GM12878 (cell line): ENCODE measurements at regions of chr13 and their contacts with region 1.

Region 1: DNA sequence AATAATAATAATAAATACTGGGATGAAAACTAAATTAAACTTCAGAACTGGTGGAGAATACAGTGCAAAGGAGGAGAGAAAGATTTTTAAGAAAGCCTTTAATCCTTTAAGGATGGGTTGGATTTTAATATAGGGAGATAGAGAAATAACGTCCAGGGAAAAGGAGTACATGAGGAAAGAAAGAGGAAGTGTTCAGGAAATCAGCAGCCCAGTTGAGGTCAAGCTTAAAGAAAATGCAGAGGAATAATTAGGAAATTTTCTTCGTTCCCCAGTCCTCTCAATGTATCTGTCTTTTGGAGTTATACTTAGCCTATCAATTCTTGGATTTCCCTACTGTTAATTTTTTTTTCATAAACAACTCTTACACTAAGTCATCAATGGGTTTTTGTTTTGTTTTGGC is 47.7 kb downstream of the INTS6 start:
- DNase-seq: no peak
- ATAC-seq: no peak
- H3K4me3 ChIP-seq: no peak overlapping the region
- H3K27ac ChIP-seq: no peak overlapping the region
- H3K4me1 ChIP-seq: peaks cover 7% of the 10 kb centered on the region; the same call in 1 of the 2 replicates
- H3K27me3 ChIP-seq: no peaks in the 10 kb centered on the region
- CTCF ChIP-seq: no peak
- EP300 ChIP-seq: no peak
- POLR2A ChIP-seq: no peak
- RAD21 ChIP-seq: no peak

Region 2: DNA sequence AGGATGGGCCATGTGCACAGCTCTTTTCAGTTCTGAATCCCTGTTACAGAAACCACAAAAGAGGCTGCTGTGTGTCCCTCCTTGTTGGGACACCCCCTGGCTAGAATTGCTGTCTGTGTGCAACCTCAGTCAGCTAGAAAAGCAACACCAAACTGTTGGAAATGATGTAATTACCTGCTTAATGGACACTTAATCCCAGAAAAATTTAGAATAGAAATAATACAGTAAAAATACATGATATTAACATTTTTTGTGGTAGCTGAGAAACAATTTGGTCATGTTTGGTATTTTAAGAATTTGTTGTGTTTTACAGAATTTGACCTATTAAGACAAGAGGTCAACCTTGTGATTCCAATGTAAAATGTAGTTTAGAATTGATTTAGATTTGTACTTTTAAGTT is 136.1 kb before region 1 on chr13:
- CTCF ChIA-PET with region 1: no interaction called
- POLR2A ChIA-PET with region 1: no interaction called
- RAD21 ChIA-PET with region 1: no interaction called
- SMC1A ChIA-PET with region 1: no interaction called
- in situ Hi-C with region 1: no loop called
- intact Hi-C with region 1: no loop called
- DNase-seq: no peak
- ATAC-seq: no peak
- H3K4me3 ChIP-seq: no peak overlapping the region
- H3K27ac ChIP-seq: no peak overlapping the region
- H3K4me1 ChIP-seq: no peaks in the 10 kb centered on the region
- H3K27me3 ChIP-seq: peaks cover 0 to 8% of the 10 kb centered on the region in 2 experiments; a peak in 1 of 4 replicates
- CTCF ChIP-seq: no peak
- EP300 ChIP-seq: no peak
- POLR2A ChIP-seq: no peak
- RAD21 ChIP-seq: no peak

Region 3: GRCh38 chr13:51420681-51421490 is 15.7 kb after region 1 on chr13:
- CTCF ChIA-PET with region 1: interaction called, 6 read pairs
- POLR2A ChIA-PET with region 1: interaction called, 3 read pairs
- RAD21 ChIA-PET with region 1: interaction called, 5 read pairs
- SMC1A ChIA-PET with region 1: interaction called, 10 read pairs
- in situ Hi-C with region 1: no loop called
- intact Hi-C with region 1: no loop called
- DNase-seq: no peak
- ATAC-seq: 0 out of 3 replicates have a peak, but pooled peaks have one; percentile 6
- H3K4me3 ChIP-seq: no peak overlapping the region
- H3K27ac ChIP-seq: peak overlapping the region; percentile 66
- H3K4me1 ChIP-seq: peaks cover 52% of the 10 kb centered on the region
- H3K27me3 ChIP-seq: no peaks in the 10 kb centered on the region
- CTCF ChIP-seq: no peak
- EP300 ChIP-seq: no peak
- POLR2A ChIP-seq: no peak
- RAD21 ChIP-seq: no peak